ENCODE measurements at regions of chr3 and their contacts with region 1.

Region 1: GRCh38 chr3:72482589-72483321 is 365.5 kb downstream of the SHQ1 start:
- DNase-seq: peak; percentile 96
- H3K4me3 Mint-ChIP-seq: peak overlapping the region; percentile 4
- H3K27ac Mint-ChIP-seq: peak overlapping the region; percentile 88
- H3K4me1 Mint-ChIP-seq: peaks cover 68% of the 10 kb centered on the region
- H3K27me3 Mint-ChIP-seq: no peaks in the 10 kb centered on the region

Region 2: GRCh38 chr3:71875461-71875947 is 607.3 kb before region 1 on chr3:
- CTCF ChIA-PET with region 1: no interaction called
- intact Hi-C with region 1: loop called (anchors 5 kb)
- DNase-seq: peak; percentile 92
- H3K4me3 Mint-ChIP-seq: no peak overlapping the region
- H3K27ac Mint-ChIP-seq: peak overlapping the region; percentile 76
- H3K4me1 Mint-ChIP-seq: peaks cover 35% of the 10 kb centered on the region
- H3K27me3 Mint-ChIP-seq: no peaks in the 10 kb centered on the region

Region 3: GRCh38 chr3:72134989-72135451 is 347.7 kb before region 1 on chr3:
- CTCF ChIA-PET with region 1: no interaction called
- intact Hi-C with region 1: loop called (anchors 2 kb)
- DNase-seq: peak; percentile 18
- H3K4me3 Mint-ChIP-seq: peak overlapping the region; percentile 49
- H3K27ac Mint-ChIP-seq: peak overlapping the region; percentile 78
- H3K4me1 Mint-ChIP-seq: peaks cover 47% of the 10 kb centered on the region
- H3K27me3 Mint-ChIP-seq: peaks cover 4% of the 10 kb centered on the region

Region 4: GRCh38 chr3:72418244-72418643 is 64.5 kb before region 1 on chr3:
- CTCF ChIA-PET with region 1: no interaction called
- intact Hi-C with region 1: loop called (anchors 2 kb)
- DNase-seq: no peak
- H3K4me3 Mint-ChIP-seq: no peak overlapping the region
- H3K27ac Mint-ChIP-seq: no peak overlapping the region
- H3K4me1 Mint-ChIP-seq: peaks cover 59% of the 10 kb centered on the region
- H3K27me3 Mint-ChIP-seq: no peaks in the 10 kb centered on the region

Region 5: DNA sequence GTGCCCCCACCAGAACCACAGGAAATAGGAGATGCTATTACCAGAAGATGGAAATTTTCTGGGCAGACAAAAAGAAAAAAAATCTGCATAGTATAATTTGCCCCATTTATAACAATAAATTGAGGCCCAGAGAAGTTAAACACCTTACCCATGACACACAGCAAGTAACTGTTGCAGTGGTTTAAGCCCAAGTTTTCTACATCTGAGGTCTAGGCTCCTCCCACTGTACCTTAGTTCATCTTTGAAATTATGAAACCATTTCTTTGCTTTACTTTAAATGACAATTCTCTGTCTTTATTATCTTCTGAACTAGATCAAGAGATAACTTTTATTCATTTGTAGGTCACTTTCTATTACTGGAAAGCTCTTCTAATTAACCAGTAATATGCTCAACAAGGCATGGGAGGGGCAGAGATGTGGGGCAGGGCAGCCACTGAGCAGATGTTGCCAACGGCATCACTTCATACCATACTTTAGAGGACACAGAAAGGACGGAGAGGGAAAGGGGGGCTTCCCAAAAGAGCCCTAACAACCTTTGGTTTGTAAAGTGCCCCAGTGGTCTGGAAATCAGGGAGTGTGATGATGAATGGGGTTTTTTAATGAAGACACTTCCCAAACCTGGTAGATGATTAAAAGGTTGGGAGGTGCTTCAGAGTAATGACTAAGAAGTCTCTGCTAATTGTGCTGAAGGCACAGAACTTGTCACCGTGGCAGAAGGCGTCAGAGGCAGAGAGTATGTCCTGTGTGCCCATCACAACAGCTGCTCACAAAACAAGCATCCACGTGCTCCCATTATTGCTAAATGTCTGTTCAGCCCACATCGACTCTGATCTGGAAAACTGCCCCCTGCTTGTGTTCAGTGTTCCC is 23.0 kb after region 1 on chr3:
- CTCF ChIA-PET with region 1: interaction called, 5 read pairs
- intact Hi-C with region 1: loop called (anchors 2 kb)
- DNase-seq: peak; percentile 42
- H3K4me3 Mint-ChIP-seq: no peak overlapping the region
- H3K27ac Mint-ChIP-seq: peak overlapping the region; percentile 24
- H3K4me1 Mint-ChIP-seq: peaks cover 14% of the 10 kb centered on the region
- H3K27me3 Mint-ChIP-seq: no peaks in the 10 kb centered on the region

Region 6: DNA sequence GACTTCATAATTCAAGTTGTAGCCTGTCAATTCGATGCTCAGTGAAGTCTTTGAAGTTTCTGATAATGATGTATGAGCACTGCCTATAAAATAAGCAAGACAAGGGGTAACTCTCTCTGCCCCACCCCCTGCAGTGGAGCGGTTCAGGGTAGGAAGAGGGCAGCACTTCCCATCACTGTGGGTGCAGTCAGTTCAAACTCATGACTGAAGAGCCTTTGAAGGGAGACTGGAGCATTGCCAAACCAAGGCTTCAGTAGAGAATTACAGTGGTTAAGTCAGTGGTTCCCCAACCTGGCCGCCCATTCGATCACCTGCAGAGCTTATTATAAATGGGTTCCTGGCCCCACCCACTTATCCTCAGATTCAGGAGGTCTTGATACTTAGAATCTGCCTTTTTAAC is 174.9 kb after region 1 on chr3:
- CTCF ChIA-PET with region 1: no interaction called
- intact Hi-C with region 1: loop called (anchors 1 kb)
- DNase-seq: peak; percentile 83
- H3K4me3 Mint-ChIP-seq: no peak overlapping the region
- H3K27ac Mint-ChIP-seq: no peak overlapping the region
- H3K4me1 Mint-ChIP-seq: peaks cover 23% of the 10 kb centered on the region
- H3K27me3 Mint-ChIP-seq: peaks cover 13% of the 10 kb centered on the region

Region 7: GRCh38 chr3:73029321-73029796 is 546.6 kb after region 1 on chr3:
- CTCF ChIA-PET with region 1: no interaction called
- intact Hi-C with region 1: loop called (anchors 1 kb)
- DNase-seq: no peak
- H3K4me3 Mint-ChIP-seq: no peak overlapping the region
- H3K27ac Mint-ChIP-seq: peak overlapping the region; percentile 10
- H3K4me1 Mint-ChIP-seq: peaks cover 80% of the 10 kb centered on the region
- H3K27me3 Mint-ChIP-seq: no peaks in the 10 kb centered on the region